H1 (cell line): ENCODE measurements at regions of chr11 and their contacts with region 1.

Region 1: DNA sequence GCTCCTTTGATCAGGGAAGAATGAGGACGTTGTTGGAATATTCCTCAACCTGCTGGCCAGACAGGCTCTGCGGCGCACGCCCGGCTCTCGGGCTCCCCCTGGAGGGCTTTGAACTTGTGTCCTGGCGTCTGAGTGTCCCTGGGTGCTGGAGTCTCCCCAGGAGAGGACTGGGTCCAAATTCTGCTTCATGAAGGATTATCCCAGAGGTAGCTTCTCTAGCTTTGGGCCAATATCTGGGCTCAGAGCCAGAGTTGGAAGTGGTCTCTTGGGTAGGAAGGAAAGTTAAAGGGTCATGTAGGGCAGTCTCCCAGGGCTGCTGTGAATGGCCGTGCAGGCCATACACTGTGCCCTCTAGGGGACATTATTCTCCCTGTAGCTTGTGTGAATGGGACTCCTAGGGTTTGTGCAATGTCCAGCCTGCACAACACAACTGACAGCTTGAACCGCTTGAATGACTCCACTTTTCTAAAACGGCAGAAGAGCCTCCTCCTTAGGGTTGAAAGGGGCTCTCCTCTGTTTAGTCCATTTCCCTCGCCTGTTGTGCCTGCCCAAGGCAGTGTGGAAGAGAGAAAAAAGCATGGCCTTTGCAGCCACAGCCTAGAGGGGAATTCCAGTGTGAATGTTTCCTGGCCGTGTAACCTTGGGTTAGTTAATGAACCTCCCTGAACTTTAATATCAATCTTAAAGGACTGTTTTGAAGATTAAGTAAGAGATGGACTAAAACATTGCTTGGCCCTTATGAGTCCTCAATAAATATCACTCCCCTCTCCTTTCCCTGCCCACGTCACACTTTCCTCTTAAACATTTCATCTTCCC is 111.2 kb upstream of the THY1 start:
- DNase-seq: peak; percentile 36 to 96
- H3K4me3 ChIP-seq: no peak overlapping the region
- H3K27ac ChIP-seq: no peak overlapping the region
- H3K4me1 ChIP-seq: peaks cover 0 to 6% (median under 1%) of the 10 kb centered on the region in 4 experiments; a peak in 2 of 7 replicates
- H3K27me3 ChIP-seq: peaks cover 0 to 3% (median 0%) of the 10 kb centered on the region in 4 experiments; a peak in 1 of 7 replicates
- CTCF ChIP-seq: peak; percentile 80 to 96 (median 85)
- EP300 ChIP-seq: no peak
- POLR2A ChIP-seq: no peak
- RAD21 ChIP-seq: peak; percentile 76 to 84

Region 2: DNA sequence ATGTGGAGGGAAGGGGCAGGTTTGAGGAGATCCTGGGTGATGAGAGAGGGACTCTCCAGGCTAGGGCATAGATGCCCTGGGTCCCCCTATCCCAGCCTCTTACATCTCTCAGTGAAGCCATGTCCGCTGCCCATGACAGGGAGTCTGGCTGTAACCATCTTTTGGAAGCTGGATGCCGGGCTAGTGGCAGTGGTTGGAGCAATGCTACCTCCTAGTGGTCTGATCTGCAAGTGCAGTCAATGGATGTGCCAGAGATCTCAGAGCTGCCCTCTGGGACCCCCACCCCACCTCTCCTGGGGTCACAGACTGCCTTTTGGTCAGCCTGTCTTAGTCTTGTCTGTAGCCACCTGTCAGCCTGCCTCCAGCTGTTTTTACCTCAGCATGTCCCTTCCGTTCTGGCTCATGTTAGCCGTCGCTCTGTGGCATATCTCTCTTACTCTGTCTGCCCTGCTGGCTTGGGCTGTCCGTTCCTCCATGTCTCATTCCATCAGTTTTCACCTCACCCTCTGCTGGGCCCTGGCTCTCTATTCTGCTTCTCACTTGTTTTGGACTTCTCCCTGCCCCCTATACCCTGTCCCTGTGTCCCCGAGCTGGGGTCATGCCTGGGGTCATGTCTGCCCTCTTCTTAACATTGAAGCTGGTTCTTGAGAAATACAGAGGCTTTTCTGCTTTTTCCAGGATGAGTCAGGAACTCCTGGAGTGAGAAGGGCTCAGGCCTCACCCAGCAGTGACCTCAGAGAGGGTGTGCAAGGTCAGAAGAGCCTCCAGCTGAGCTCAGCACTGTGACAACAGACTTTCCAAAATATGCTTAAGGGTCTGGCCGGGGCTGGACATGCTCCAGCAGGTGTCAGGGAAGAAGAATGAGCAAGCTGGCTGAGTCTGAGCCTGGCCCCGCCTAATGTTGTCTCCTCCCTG is 59.2 kb before region 1 on chr11:
- CTCF ChIA-PET with region 1: interaction called, 160 read pairs
- POLR2A ChIA-PET with region 1: no interaction called
- DNase-seq: peak in 1 of 2 experiments; percentile 91
- H3K4me3 ChIP-seq: no peak overlapping the region
- H3K27ac ChIP-seq: no peak overlapping the region
- H3K4me1 ChIP-seq: peaks cover 0 to 13% (median under 1%) of the 10 kb centered on the region in 4 experiments; a peak in 5 of 7 replicates
- H3K27me3 ChIP-seq: no peaks in the 10 kb centered on the region; a peak in 2 of 7 replicates
- CTCF ChIP-seq: peak; percentile 83 to 95 (median 95)
- EP300 ChIP-seq: no peak
- POLR2A ChIP-seq: no peak
- RAD21 ChIP-seq: peak; percentile 98 to 99

Region 3: GRCh38 chr11:119491753-119492510 is 42.2 kb before region 1 on chr11:
- CTCF ChIA-PET with region 1: interaction called, 160 read pairs
- POLR2A ChIA-PET with region 1: no interaction called
- DNase-seq: no peak
- H3K4me3 ChIP-seq: no peak overlapping the region
- H3K27ac ChIP-seq: no peak overlapping the region
- H3K4me1 ChIP-seq: peaks cover 0 to 5% (median 2%) of the 10 kb centered on the region in 4 experiments; a peak in 5 of 7 replicates
- H3K27me3 ChIP-seq: no peaks in the 10 kb centered on the region
- CTCF ChIP-seq: peak in 1 of 3 experiments; percentile 13; a peak in 2 of 4 replicates
- EP300 ChIP-seq: no peak
- POLR2A ChIP-seq: no peak
- RAD21 ChIP-seq: peak in 1 of 2 experiments; percentile 38; a peak in 2 of 4 replicates

Region 4: GRCh38 chr11:119518746-119519730 is 15.1 kb before region 1 on chr11:
- CTCF ChIA-PET with region 1: interaction called, 92 read pairs
- POLR2A ChIA-PET with region 1: interaction called, 3 read pairs
- DNase-seq: peak; percentile 25 to 65
- H3K4me3 ChIP-seq: no peak overlapping the region
- H3K27ac ChIP-seq: no peak overlapping the region
- H3K4me1 ChIP-seq: no peaks in the 10 kb centered on the region; a peak in 1 of 7 replicates
- H3K27me3 ChIP-seq: no peaks in the 10 kb centered on the region
- CTCF ChIP-seq: no peak
- EP300 ChIP-seq: no peak
- POLR2A ChIP-seq: no peak
- RAD21 ChIP-seq: 0 out of 4 replicates have a peak, but pooled peaks of 1 of the 2 experiments have one; percentile 0

Region 5: DNA sequence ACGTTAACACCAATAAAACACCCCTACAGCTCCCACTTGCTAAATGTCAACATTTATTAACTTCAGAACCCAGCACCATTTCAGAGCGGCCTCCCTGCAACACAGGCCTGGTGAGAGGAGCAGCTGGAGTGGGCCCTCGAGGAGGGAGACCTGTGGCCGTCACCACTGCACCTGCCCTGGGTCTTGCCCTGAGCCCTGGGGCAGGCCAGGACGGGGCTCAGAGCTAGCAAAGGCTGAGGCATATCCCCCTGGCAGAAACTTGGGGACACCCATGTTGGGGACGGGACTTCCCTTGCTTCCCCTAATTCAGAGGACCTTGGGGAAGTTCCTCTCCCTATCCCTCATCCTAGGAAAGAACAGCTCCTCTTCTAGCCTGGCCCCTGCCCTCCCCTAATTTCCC is 26.2 kb after region 1 on chr11:
- CTCF ChIA-PET with region 1: interaction called, 24 read pairs
- POLR2A ChIA-PET with region 1: no interaction called
- DNase-seq: no peak
- H3K4me3 ChIP-seq: no peak overlapping the region
- H3K27ac ChIP-seq: no peak overlapping the region
- H3K4me1 ChIP-seq: no peaks in the 10 kb centered on the region; a peak in 1 of 7 replicates
- H3K27me3 ChIP-seq: no peaks in the 10 kb centered on the region; a peak in 1 of 7 replicates
- CTCF ChIP-seq: no peak
- EP300 ChIP-seq: no peak
- POLR2A ChIP-seq: no peak
- RAD21 ChIP-seq: no peak

Region 6: DNA sequence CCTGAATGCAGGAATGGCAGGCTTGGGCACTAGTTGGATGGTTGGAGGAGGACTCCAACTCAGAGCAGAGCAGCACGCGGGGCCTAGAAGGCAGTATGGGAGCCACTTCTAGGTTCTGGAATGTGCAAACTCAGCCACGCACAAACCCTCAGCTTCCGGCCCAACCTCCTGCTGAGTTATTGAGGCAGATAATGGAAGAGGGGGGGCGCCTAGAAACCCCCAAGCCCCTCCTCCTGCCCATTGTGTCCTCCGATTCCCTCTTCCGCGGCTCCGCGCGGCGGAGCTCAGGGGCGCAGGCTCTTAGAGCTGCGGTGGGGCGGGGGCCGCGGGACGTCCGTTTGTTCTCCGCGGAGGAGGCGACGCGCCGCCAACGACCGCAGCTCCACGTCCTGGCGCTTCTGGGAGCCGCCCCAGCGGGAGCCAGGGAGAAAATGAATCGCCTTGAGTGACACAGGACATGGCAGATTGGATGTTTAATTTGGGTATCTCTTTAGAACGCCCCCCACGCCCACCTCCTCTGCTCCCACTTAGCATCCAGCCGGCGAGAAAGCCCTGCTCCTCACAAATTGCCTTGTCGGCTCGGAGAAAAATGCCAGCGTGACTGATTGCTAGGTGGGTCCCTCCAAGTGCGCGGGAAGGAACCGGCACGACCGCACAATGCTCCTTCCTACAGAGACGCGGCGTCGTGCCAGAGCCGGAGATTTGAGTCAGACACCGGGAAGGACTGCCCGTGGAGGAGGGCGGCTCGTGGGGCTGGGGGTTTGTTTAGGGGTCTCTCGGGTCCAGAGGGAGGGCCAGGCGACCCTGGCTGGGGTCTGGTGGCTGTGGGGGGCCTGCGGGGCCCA is 50.3 kb after region 1 on chr11:
- CTCF ChIA-PET with region 1: interaction called, 19 read pairs
- POLR2A ChIA-PET with region 1: no interaction called
- DNase-seq: peak; percentile 70 to 79
- H3K4me3 ChIP-seq: peak overlapping the region; percentile 59 to 69 (median 64)
- H3K27ac ChIP-seq: no peak overlapping the region
- H3K4me1 ChIP-seq: peaks cover 0 to 13% (median 7%) of the 10 kb centered on the region in 4 experiments; a peak in 6 of 7 replicates
- H3K27me3 ChIP-seq: peaks cover 0 to 18% (median 7%) of the 10 kb centered on the region in 4 experiments; a peak in 4 of 7 replicates
- CTCF ChIP-seq: no peak
- EP300 ChIP-seq: peak in 1 of 2 experiments; percentile 47; a peak in 1 of 3 replicates
- POLR2A ChIP-seq: peak in 1 of 2 experiments; percentile 76; a peak in 2 of 3 replicates
- RAD21 ChIP-seq: no peak

Region 7: DNA sequence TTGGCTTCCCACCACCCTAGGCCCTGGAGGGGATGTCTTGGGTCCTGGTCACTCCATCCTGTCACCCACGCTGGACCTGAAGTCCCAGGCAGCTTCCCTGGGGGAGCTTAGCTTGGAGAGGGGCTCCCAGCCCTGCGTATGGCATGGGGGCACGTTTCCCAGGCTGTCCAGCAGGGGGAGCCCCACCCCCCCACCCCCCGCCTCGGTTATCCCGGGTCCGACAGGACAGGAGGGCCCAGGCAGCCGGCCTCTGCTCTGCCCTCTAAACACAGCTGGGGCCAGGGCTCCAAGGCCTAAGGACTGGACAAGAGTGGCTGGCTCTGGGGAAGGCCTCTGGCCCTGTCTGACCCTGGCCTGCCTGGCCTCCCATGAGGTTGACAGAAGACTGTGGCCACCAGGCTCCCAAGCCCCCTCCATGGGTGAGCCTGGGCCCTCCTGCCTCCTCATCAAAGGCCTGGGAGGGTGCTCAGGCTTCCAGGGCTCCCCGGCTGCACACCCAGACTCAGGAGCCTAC is 90.0 kb after region 1 on chr11:
- CTCF ChIA-PET with region 1: interaction called, 11 read pairs
- POLR2A ChIA-PET with region 1: interaction called, 3 read pairs
- DNase-seq: no peak
- H3K4me3 ChIP-seq: no peak overlapping the region
- H3K27ac ChIP-seq: no peak overlapping the region
- H3K4me1 ChIP-seq: peaks cover 5 to 30% (median 17%) of the 10 kb centered on the region in 4 experiments
- H3K27me3 ChIP-seq: no peaks in the 10 kb centered on the region; a peak in 2 of 7 replicates
- CTCF ChIP-seq: peak; percentile 50 to 77 (median 56); a peak in 3 of 4 replicates
- EP300 ChIP-seq: no peak
- POLR2A ChIP-seq: no peak
- RAD21 ChIP-seq: peak in 1 of 2 experiments; percentile 52; a peak in 2 of 4 replicates